ENCODE measurements at regions of chr18 and their contacts with region 1.

Region 1: GRCh38 chr18:12990967-12991838 is at the start of gene CEP192:
- DNase-seq: peak; percentile 98
- H3K4me3 ChIP-seq: peak within 1 kb of the TSS; percentile 87 to 89
- H3K27ac ChIP-seq: peak within 1 kb of the TSS; percentile 85 to 86
- H3K4me1 ChIP-seq: peaks cover 4% of the 10 kb centered on the region
- H3K27me3 ChIP-seq: no peaks in the 10 kb centered on the region
- CTCF ChIP-seq: peak in 2 of 4 experiments; percentile 15 to 39
- POLR2A ChIP-seq: peak; percentile 79
- total RNA-seq, gene CEP192: 17.2 to 37.3 TPM

Region 2: DNA sequence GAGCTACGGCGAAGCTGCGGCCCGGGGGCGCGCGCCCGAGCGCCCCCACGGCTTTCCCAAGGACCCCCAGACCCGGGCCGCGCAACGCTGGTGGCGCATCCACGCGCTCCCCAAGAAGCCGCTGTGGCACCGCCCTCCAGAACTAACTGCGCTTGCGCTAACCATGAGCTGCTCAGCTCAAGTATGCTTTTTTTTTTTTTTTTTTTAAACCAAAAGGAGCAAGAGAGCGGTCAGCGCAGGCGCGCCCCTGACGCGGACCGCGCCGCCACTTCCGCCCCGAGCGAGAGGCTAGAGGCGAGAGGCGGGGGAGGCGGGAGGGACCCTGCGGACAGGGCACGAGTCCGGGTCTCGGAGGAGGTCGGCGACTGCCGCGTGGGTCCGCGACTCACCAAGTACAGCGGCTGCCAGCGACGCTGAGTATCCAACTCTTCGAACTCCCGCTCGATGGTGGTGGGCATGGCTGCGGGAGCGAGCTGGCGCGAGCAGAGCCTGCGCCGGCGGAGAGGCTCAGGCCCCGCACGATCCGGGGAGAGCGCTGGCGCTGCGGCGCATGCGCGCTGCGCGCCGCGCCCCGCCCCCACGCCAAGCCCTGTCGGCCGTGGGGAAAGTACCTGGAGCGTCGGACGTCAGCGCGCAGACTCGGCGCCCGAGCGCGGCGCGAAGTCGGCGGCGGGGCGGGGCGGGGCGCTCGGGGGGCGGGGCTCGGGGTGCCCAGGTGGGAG is 107.4 kb before region 1 on chr18 and contains the start of gene PTPN2:
- intact Hi-C with region 1: loop called (anchors 2 kb)
- DNase-seq: peak; percentile 92
- H3K4me3 ChIP-seq: peak within 1 kb of the TSS; percentile 63 to 88
- H3K27ac ChIP-seq: peak within 1 kb of the TSS; percentile 98 to 99
- H3K4me1 ChIP-seq: no peaks in the 10 kb centered on the region
- H3K27me3 ChIP-seq: no peaks in the 10 kb centered on the region
- CTCF ChIP-seq: no peak
- POLR2A ChIP-seq: peak; percentile 82
- total RNA-seq, gene PTPN2: 25.0 to 34.0 TPM

Region 3: GRCh38 chr18:12947355-12948041 is 43.7 kb before region 1 on chr18 and contains the start of gene SEH1L:
- intact Hi-C with region 1: loop called (anchors 2 kb)
- DNase-seq: peak; percentile 100
- H3K4me3 ChIP-seq: peak within 1 kb of the TSS; percentile 63
- H3K27ac ChIP-seq: peak within 1 kb of the TSS; percentile 92 to 95
- H3K4me1 ChIP-seq: peaks cover 4% of the 10 kb centered on the region
- H3K27me3 ChIP-seq: no peaks in the 10 kb centered on the region
- CTCF ChIP-seq: no peak
- POLR2A ChIP-seq: peak; percentile 77
- total RNA-seq, gene SEH1L: 35.9 to 46.6 TPM

Region 4: GRCh38 chr18:13070460-13070859 is 79.3 kb after region 1 on chr18:
- intact Hi-C with region 1: loop called (anchors 10 kb)
- DNase-seq: no peak
- H3K4me3 ChIP-seq: no peak overlapping the region
- H3K27ac ChIP-seq: no peak overlapping the region
- H3K4me1 ChIP-seq: no peaks in the 10 kb centered on the region
- H3K27me3 ChIP-seq: no peaks in the 10 kb centered on the region
- CTCF ChIP-seq: no peak
- POLR2A ChIP-seq: no peak

Measured in prostate gland (tissue), 2 donors.